Vagina (tissue), 2 donors: ENCODE measurements at regions of chr5 and their contacts with region 1.

Region 1: DNA sequence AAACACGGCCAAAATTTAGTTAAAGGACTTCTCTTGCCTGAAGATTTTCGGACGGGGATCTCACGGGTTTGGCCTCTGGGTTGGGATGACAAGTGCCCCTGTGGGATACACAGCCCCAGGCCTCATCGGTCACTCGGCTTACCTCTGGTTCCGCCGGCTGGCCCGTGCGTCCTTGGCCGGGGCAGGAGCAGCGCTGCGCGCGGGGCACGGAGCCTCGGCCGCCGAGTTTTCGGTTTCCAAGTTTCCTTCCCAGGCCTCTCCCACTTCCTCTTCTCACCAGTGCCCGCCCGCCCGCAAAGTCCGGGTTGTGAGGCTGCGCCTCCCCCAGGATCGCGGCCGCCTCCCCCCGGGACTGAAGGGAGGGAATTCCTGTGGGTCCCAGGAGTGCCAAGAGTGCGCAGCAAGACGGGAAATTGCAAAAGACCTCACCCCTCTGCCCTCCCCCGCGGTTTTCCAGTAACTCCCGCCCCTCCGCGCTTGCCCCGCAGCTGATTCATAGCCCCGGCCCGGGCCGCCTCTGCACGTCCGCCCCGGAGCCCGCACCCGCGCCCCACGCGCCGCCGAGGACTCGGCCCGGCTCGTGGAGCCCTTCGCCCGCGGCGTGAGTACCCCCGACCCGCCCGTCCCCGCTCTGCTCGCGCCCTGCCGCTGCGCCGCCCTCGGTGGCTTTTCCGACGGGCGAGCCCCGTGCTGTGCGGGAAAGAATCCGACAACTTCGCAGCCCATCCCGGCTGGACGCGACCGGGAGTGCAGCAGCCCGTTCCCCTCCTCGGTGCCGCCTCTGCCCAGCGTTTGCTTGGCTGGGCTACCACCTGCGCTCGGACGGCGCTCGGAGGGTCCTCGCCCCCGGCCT is at the start of gene OSMR:
- DNase-seq: peak in 1 of 2 donors; percentile 98
- H3K4me3 ChIP-seq: peak within 1 kb of the TSS; percentile 73 to 92
- H3K27ac ChIP-seq: peak within 1 kb of the TSS; percentile 92
- H3K4me1 ChIP-seq: peaks cover 34% of the 10 kb centered on the region
- H3K27me3 ChIP-seq: no peaks in the 10 kb centered on the region
- CTCF ChIP-seq: peak in 1 of 3 experiments; percentile 1
- POLR2A ChIP-seq: peak in 1 of 2 donors; percentile 86
- total RNA-seq, gene OSMR: 69.0 TPM

Region 2: DNA sequence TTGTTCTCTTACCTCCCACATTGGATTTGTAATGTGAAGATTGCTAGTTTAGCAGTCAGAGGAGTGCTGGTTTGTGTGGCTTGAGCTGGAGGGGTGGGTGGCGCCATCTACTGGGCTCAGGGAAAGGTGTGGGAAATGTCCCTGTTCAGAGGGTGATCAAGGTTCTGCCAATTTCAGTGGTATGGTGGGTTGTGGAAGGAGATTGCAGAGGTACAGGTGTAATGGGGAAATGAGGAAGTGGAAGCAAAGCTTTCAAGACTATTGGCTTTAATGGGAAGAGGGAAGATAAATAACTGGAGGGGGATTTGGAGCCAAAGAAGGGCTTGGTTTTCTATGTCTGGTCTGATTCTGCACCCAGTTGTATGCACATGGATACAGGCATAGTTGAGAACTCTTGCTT is 76.4 kb after region 1 on chr5:
- intact Hi-C with region 1: loop called (anchors 10 kb)
- DNase-seq: no peak
- H3K4me3 ChIP-seq: no peak overlapping the region
- H3K27ac ChIP-seq: no peak overlapping the region
- H3K4me1 ChIP-seq: peaks cover 20% of the 10 kb centered on the region
- H3K27me3 ChIP-seq: no peaks in the 10 kb centered on the region
- CTCF ChIP-seq: peak; percentile 25 to 48 (median 48)
- POLR2A ChIP-seq: no peak

Region 3: DNA sequence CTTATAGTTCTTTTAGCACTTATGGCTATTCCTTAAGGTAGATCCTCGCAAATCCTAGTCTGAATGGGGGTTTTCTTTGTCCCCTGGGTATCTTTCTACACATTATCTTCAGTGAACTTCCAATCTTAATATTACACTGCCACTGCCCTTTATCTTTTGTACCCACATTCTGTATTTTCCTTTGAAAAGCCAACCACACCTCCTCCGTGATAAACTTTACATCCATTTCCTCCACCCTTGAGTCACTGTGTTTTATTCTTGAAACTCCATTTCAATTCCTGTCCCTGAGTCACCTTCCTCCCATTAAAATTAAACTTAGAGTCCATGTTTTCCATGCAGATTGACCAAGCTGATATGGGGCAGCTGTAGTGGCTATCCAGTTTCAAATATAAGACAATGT is 271.6 kb after region 1 on chr5:
- intact Hi-C with region 1: no loop called
- DNase-seq: no peak
- H3K4me3 ChIP-seq: no peak overlapping the region
- H3K27ac ChIP-seq: no peak overlapping the region
- H3K4me1 ChIP-seq: no peaks in the 10 kb centered on the region
- H3K27me3 ChIP-seq: no peaks in the 10 kb centered on the region
- CTCF ChIP-seq: no peak
- POLR2A ChIP-seq: no peak